Ascending aorta (tissue), 2 donors: ENCODE measurements at regions of chr7 and their contacts with region 1.

Region 1: DNA sequence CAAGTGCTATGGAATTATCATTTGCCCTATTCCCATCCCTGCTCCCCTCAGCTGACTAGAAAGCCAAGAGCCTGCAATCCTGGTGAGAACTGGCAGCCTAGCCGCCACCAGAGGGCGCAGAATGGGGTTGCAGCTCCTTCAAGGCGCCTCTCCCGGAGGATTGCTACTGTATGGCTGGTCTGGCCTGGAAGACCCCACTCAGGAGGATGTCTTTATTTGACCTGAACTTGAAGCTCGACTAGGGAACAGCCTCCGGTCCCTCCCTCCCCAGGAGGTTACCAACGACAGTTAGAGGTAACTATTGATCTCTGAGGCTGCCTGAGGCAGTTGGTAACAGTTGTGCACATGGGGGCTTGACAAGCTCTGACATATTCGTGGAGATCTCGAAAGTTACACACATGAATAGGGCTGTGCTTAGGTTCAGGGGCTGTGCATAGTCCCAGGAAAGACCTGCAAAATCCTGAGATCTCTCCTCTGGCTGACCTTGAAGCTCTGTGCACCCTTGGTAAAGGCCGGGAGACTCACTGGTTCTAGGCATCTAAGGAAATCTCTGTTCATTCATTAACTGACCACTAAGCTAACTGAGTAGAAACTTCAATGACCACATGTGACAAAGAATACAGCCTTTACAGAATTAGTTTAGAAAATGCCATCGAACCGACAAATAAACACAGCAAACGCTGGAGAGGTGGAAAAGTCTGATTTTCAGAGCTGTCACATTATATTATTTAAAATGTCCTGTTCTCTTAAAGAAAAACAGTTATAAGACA is 65.7 kb downstream of the TSPAN12 start:
- DNase-seq: peak in 1 of 2 donors; percentile 75
- H3K4me3 ChIP-seq: no peak overlapping the region
- H3K27ac ChIP-seq: no peak overlapping the region
- H3K4me1 ChIP-seq: no peaks in the 10 kb centered on the region
- H3K27me3 ChIP-seq: no peaks in the 10 kb centered on the region
- CTCF ChIP-seq: peak; percentile 37 to 84 (median 81)

Region 2: DNA sequence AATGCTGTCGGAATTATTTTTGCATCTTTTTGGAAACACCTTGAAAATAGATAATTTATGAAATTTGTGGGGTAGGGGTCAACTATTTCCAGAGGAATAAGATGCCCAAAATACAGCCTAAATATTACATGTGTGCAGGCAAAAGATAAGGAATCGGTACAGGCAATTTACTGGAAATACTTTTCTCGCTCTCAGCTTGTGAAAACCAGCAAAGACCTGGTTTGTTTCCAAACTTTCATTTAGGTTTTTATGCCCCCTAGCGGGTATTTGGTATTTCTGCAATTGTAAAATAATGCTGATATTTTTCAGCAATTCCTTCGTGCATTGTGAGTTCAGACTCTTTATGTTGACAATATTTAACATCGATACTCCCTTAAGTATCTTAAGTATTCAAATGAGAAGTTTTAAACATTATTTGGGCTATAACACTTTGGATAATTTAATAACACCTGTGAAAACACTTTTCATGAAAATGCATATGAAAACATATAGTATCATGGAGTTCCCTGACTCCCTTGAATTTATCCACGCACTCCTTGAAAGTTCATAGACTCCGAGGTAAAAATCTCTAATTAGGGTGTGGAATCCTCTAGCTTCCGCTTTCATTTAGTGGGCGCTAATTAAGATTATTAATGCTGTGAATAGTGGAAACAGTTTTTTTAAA is 66.8 kb before region 1 on chr7:
- intact Hi-C with region 1: no loop called
- DNase-seq: no peak
- H3K4me3 ChIP-seq: no peak overlapping the region
- H3K27ac ChIP-seq: no peak overlapping the region
- H3K4me1 ChIP-seq: no peaks in the 10 kb centered on the region
- H3K27me3 ChIP-seq: no peaks in the 10 kb centered on the region
- CTCF ChIP-seq: peak in 2 of 3 experiments; percentile 43 to 50

Region 3: GRCh38 chr7:121107923-121108498 is 315.7 kb after region 1 on chr7:
- intact Hi-C with region 1: loop called (anchors 5 kb)
- DNase-seq: no peak
- H3K4me3 ChIP-seq: no peak overlapping the region
- H3K27ac ChIP-seq: no peak overlapping the region
- H3K4me1 ChIP-seq: no peaks in the 10 kb centered on the region
- H3K27me3 ChIP-seq: no peaks in the 10 kb centered on the region
- CTCF ChIP-seq: peak; percentile 69 to 78 (median 72)